ENCODE measurements at regions of chr21 and their contacts with region 1.

Region 1: GRCh38 chr21:41283211-41283818 is 33.3 kb upstream of the FAM3B start:
- DNase-seq: peak; percentile 50 to 69
- ATAC-seq: peak; percentile 95 to 96
- H3K4me3 ChIP-seq: no peak overlapping the region
- H3K27ac ChIP-seq: no peak overlapping the region
- H3K4me1 ChIP-seq: no peaks in the 10 kb centered on the region
- CTCF ChIP-seq: peak; percentile 71
- EP300 ChIP-seq: no peak
- POLR2A ChIP-seq: no peak
- RAD21 ChIP-seq: peak; percentile 78 to 82

Region 2: DNA sequence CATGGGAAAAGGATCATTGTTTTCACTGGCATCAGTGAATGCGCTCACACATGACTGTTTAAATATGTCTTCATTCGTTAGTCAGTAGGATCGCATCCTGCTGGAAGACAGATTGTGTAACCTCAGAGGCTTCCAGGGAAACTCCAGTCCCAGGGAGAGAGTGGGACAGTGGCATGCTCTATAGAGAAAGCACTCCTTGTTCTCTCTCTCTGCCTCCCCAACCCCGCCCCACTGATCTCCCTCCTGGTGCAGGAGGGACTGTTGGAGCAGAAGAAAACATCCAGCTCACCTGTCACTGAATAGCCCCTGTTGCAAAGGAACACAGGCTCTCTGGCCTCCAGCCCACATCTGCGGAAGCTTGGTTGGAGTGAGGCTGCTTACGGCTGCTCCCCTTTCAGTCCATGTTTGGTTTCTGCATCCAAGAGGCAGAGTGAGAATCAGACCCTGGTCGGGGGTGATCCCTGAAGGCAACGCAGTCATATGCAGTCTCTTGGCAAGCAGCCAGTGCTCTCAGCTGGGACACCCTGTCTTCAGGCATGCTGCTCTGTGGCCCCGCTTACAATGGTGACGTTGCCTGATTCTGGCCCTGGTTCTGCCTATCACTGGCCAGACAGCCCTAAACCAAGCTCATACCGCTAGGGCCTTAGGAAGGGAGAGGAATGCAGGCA is 75.8 kb before region 1 on chr21:
- CTCF ChIA-PET with region 1: no interaction called
- POLR2A ChIA-PET with region 1: no interaction called
- DNase-seq: no peak
- ATAC-seq: no peak
- H3K4me3 ChIP-seq: no peak overlapping the region
- H3K27ac ChIP-seq: no peak overlapping the region
- H3K4me1 ChIP-seq: no peaks in the 10 kb centered on the region
- CTCF ChIP-seq: no peak
- EP300 ChIP-seq: no peak
- POLR2A ChIP-seq: no peak
- RAD21 ChIP-seq: no peak

Region 3: DNA sequence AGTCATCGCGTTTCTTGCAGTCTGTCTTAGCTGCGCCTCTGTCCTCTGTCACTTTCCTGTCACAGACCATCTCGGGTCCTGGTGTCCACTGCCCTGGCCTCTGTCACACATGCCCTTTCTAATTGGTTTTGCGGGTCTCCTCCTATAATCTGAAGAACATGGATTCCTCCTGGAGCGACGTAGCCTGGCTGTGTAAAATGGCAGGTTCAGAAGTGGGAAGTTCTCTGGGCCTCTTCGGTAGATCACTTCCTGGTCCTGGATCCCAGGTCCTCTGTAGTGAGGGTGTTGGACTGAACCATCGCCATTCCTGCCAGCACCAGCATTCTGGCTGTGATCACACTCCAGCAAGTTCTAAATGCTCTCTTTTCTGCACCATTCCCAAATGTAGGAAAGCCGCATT is 34.1 kb after region 1 on chr21:
- CTCF ChIA-PET with region 1: interaction called, 11 read pairs
- POLR2A ChIA-PET with region 1: no interaction called
- DNase-seq: no peak
- ATAC-seq: no peak
- H3K4me3 ChIP-seq: no peak overlapping the region
- H3K27ac ChIP-seq: no peak overlapping the region
- H3K4me1 ChIP-seq: no peaks in the 10 kb centered on the region
- CTCF ChIP-seq: no peak
- EP300 ChIP-seq: no peak
- POLR2A ChIP-seq: no peak
- RAD21 ChIP-seq: no peak

Region 4: GRCh38 chr21:41460578-41461527 is 177.5 kb after region 1 on chr21:
- CTCF ChIA-PET with region 1: interaction called, 69 read pairs
- POLR2A ChIA-PET with region 1: interaction called, 5 read pairs
- DNase-seq: peak; percentile 31 to 65
- ATAC-seq: peak; percentile 93 to 94; a peak in 5 of 6 replicates
- H3K4me3 ChIP-seq: no peak overlapping the region
- H3K27ac ChIP-seq: no peak overlapping the region
- H3K4me1 ChIP-seq: no peaks in the 10 kb centered on the region
- CTCF ChIP-seq: peak; percentile 54
- EP300 ChIP-seq: no peak
- POLR2A ChIP-seq: no peak
- RAD21 ChIP-seq: peak; percentile 56 to 66

Region 5: DNA sequence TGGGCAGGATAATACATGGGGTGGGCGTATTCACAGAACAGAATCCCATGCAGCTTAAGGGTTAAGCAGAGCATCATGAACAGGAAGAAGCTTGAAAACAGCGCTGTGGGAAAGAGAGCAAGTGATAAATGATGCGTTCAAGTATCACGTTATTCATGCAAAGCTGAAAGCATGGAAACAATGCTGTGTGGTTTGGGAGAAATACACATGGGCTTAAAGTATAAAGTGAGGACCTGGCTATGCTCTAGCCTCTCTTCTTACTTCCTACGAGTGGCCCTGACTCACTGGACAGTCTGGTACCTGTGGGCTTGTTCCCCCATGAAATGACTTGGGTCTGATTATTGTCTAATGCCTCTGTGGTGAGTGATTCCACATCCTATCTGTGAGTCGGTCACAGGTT is 199.0 kb after region 1 on chr21:
- CTCF ChIA-PET with region 1: no interaction called
- POLR2A ChIA-PET with region 1: no interaction called
- DNase-seq: no peak
- ATAC-seq: no peak
- H3K4me3 ChIP-seq: no peak overlapping the region
- H3K27ac ChIP-seq: no peak overlapping the region
- H3K4me1 ChIP-seq: no peaks in the 10 kb centered on the region
- CTCF ChIP-seq: no peak
- EP300 ChIP-seq: no peak
- POLR2A ChIP-seq: no peak
- RAD21 ChIP-seq: no peak

Region 6: GRCh38 chr21:41816220-41817165 is 533.2 kb after region 1 on chr21:
- CTCF ChIA-PET with region 1: interaction called, 12 read pairs
- POLR2A ChIA-PET with region 1: no interaction called
- DNase-seq: peak; percentile 19 to 40
- ATAC-seq: peak; percentile 87 to 93
- H3K4me3 ChIP-seq: no peak overlapping the region
- H3K27ac ChIP-seq: no peak overlapping the region
- H3K4me1 ChIP-seq: no peaks in the 10 kb centered on the region
- CTCF ChIP-seq: peak; percentile 45
- EP300 ChIP-seq: no peak
- POLR2A ChIP-seq: no peak
- RAD21 ChIP-seq: peak; percentile 45 to 65; a peak in 4 of 5 replicates

Measured in A549 (cell line).